HepG2 (cell line): ENCODE measurements at regions of chr2 and their contacts with region 1.

Region 1: GRCh38 chr2:54455563-54456361 is at the start of gene SPTBN1:
- DNase-seq: peak; percentile 87
- ATAC-seq: peak; percentile 86
- H3K4me3 ChIP-seq: peak within 1 kb of the TSS; percentile 93 to 96 (median 93)
- H3K27ac ChIP-seq: peak within 1 kb of the TSS; percentile 82
- H3K4me1 ChIP-seq: peaks cover 40% of the 10 kb centered on the region
- H3K27me3 ChIP-seq: no peaks in the 10 kb centered on the region; a peak in 1 of 5 replicates
- CTCF ChIP-seq: 0 out of 2 replicates have a peak, but pooled peaks have one; percentile 4
- EP300 ChIP-seq: no peak; a peak in 1 of 4 replicates
- POLR2A ChIP-seq: peak; percentile 75 to 77
- RAD21 ChIP-seq: peak; percentile 31; the same call in 1 of the 2 replicates
- total RNA-seq, gene SPTBN1: 139 and 299 TPM in 2 replicates

Region 2: GRCh38 chr2:54015798-54016699 is 439.7 kb before region 1 on chr2:
- CTCF ChIA-PET with region 1: no interaction called
- POLR2A ChIA-PET with region 1: no interaction called
- in situ Hi-C with region 1: no loop called
- intact Hi-C with region 1: no loop called
- DNase-seq: peak; percentile 73
- ATAC-seq: peak; percentile 91
- H3K4me3 ChIP-seq: no peak overlapping the region
- H3K27ac ChIP-seq: peak overlapping the region; percentile 24
- H3K4me1 ChIP-seq: peaks cover 13% of the 10 kb centered on the region
- H3K27me3 ChIP-seq: no peaks in the 10 kb centered on the region
- CTCF ChIP-seq: no peak
- EP300 ChIP-seq: 0 out of 4 replicates have a peak, but pooled peaks of 1 of the 2 experiments have one; percentile 14
- POLR2A ChIP-seq: no peak
- RAD21 ChIP-seq: no peak

Region 3: GRCh38 chr2:54176577-54176976 is 279.2 kb before region 1 on chr2:
- CTCF ChIA-PET with region 1: no interaction called
- POLR2A ChIA-PET with region 1: no interaction called
- in situ Hi-C with region 1: no loop called
- intact Hi-C with region 1: loop called (anchors 1 kb)
- DNase-seq: peak; percentile 85
- ATAC-seq: peak; percentile 99
- H3K4me3 ChIP-seq: no peak overlapping the region
- H3K27ac ChIP-seq: no peak overlapping the region
- H3K4me1 ChIP-seq: peaks cover 10% of the 10 kb centered on the region
- H3K27me3 ChIP-seq: no peaks in the 10 kb centered on the region
- CTCF ChIP-seq: peak; percentile 94
- EP300 ChIP-seq: no peak
- POLR2A ChIP-seq: no peak
- RAD21 ChIP-seq: peak; percentile 85

Region 4: GRCh38 chr2:54330162-54330925 is 125.4 kb before region 1 on chr2:
- CTCF ChIA-PET with region 1: no interaction called
- POLR2A ChIA-PET with region 1: interaction called, 3 read pairs
- in situ Hi-C with region 1: no loop called
- intact Hi-C with region 1: loop called (anchors 2 kb)
- DNase-seq: peak; percentile 95
- ATAC-seq: peak; percentile 98
- H3K4me3 ChIP-seq: peak overlapping the region; percentile 49 to 73 (median 62)
- H3K27ac ChIP-seq: peak overlapping the region; percentile 23
- H3K4me1 ChIP-seq: peaks cover 28% of the 10 kb centered on the region
- H3K27me3 ChIP-seq: peaks cover 0 to 10% of the 10 kb centered on the region in 2 experiments; a peak in 1 of 5 replicates
- CTCF ChIP-seq: no peak; the same call in 1 of the 2 replicates
- EP300 ChIP-seq: no peak
- POLR2A ChIP-seq: peak; percentile 75 to 95
- RAD21 ChIP-seq: peak; percentile 52

Region 5: GRCh38 chr2:54492335-54492734 is 36.6 kb after region 1 on chr2:
- CTCF ChIA-PET with region 1: no interaction called
- POLR2A ChIA-PET with region 1: no interaction called
- in situ Hi-C with region 1: no loop called
- intact Hi-C with region 1: loop called (anchors 2 kb)
- DNase-seq: peak; percentile 60
- ATAC-seq: peak; percentile 85
- H3K4me3 ChIP-seq: no peak overlapping the region
- H3K27ac ChIP-seq: no peak overlapping the region
- H3K4me1 ChIP-seq: peaks cover 63% of the 10 kb centered on the region
- H3K27me3 ChIP-seq: no peaks in the 10 kb centered on the region
- CTCF ChIP-seq: no peak
- EP300 ChIP-seq: no peak
- POLR2A ChIP-seq: no peak
- RAD21 ChIP-seq: no peak

Region 6: DNA sequence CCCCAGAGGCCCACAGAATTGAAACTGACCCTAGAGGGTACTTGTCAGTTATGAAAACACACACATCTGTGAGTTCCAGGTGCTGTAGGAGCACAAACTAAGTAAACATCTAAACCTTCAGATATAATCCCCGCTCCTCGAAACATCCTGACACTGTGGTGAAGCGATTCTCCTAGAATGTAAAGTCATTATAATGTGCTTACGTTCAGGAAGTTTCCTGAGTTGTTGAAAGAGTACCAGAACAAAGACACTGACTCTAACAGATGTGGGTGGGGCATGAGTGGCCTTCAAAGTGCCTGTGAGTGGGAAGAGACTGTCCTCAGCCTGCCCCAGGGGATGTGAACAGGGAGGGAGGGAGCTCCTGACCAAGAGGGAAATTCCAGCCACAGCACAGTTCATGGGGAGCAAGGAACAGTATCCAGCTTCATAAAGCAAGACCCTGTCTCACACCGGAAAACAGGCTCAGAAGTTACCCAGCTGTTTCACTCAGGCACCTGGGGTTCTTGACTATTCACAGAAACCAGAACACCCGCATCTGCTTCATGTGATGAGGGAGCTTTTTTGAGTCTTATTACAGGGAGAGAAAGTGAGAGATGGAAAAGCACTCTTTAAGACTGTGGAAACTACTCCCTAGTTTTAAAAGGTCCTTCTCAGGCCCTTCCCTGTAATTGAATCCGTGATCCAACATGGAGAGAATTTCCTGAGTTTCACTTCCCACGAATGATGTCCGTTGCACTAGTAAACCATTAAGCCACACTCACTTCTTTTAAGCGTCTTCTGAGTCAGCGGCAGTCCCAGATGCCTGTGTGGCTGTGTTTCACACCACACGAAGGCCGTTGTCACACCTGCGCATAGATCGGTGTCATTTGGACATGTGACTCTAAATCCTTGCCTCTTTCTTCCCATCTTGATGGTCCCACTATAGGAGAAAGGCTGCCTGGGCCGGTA is 179.1 kb after region 1 on chr2:
- CTCF ChIA-PET with region 1: no interaction called
- POLR2A ChIA-PET with region 1: no interaction called
- in situ Hi-C with region 1: no loop called
- intact Hi-C with region 1: no loop called
- DNase-seq: no peak
- ATAC-seq: peak; percentile 24
- H3K4me3 ChIP-seq: no peak overlapping the region
- H3K27ac ChIP-seq: no peak overlapping the region
- H3K4me1 ChIP-seq: peaks cover 37% of the 10 kb centered on the region
- H3K27me3 ChIP-seq: no peaks in the 10 kb centered on the region
- CTCF ChIP-seq: no peak
- EP300 ChIP-seq: no peak
- POLR2A ChIP-seq: peak in 1 of 2 experiments; percentile 27; a peak in 1 of 4 replicates
- RAD21 ChIP-seq: no peak